HepG2 (cell line): ENCODE measurements at regions of chr20 and their contacts with region 1.

Region 1: DNA sequence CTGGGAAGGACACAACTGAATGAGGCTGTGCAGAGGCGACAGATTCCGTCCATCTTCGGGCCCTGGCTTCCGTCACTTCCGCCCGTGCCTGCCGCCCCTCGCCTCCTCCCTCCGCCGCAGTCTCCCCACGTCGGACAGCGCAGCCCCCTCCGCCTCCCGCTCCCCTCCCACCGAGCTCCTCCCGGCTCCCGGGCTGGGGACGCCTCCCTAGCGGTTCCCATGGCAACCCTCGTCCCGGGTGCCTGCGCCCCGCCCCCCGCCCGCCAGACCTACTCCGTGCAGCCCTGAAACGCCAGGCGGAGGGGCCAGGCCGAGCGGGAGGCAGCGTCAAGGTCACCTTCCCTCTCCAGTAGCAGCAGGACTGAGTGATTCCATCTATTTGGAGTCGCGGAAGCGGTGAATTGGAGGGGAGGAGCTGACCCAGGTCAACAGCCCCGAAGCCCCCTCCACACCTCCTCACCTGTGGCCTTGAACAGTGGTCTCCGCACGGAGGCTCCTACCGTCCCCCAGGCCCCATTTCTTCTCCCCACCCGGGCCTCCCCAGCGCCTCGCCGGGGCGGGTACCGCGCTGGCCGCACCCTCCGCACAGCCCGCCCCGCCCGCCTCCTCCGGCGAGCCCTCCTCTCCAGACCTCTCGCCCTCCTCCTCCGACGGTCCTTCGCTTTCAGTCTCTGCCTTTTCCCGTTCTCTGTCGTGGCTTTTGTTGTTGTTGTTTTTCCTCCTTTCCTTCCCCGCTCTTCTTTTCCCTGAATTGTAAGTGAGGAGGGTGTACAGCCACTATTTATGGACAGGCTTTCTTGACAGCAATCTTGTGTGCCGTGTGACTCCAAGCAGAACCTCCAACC is 951 bp downstream of the NRSN2 start:
- DNase-seq: peak; percentile 99
- ATAC-seq: peak; percentile 85
- H3K4me3 ChIP-seq: peak overlapping the region; percentile 63 to 88 (median 87)
- H3K27ac ChIP-seq: peak overlapping the region; percentile 81
- H3K4me1 ChIP-seq: peaks cover 34% of the 10 kb centered on the region
- H3K27me3 ChIP-seq: no peaks in the 10 kb centered on the region
- CTCF ChIP-seq: peak; percentile 27
- EP300 ChIP-seq: peak in 1 of 2 experiments; percentile 86; a peak in 3 of 4 replicates
- POLR2A ChIP-seq: peak; percentile 80 to 85
- RAD21 ChIP-seq: peak; percentile 65

Region 2: DNA sequence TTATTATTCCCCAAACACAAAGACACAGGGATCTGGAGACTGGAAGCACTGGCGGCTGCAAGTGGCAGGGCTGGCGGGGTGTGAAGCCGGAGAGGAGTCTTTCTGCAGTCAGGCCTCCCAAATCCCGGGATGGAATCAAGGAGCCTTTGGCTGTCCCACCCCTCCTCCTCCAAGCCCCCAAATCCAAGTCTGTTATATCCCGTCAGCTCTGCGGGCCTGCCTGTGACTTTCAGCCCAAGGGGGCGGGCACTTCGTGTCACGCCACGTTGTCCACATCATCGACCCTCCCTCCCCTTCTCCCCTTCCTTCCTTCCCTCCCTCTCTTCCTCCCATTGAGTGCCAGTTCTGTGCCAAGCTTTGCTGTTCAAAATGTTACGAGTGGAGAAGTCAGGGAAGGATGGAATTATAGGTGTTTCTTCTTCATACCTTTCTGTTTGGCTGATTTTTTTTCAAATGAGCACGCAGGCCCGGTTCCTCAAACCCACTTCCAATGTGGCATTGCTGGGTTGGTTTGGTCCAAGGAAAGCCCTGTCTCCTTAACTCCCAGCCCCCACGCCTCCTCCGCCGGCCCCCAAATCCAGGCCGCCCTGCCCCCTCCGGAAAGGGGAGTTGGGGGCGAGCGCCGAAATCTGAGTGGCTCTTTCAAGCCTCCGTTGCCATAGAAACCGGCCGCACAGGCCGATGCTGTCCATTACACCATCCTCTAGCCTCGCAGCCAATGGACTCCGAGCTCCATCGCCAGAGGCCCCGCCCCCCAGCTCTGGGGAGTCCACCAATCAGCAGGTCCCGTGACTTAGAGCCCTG is 37.8 kb before region 1 on chr20:
- CTCF ChIA-PET with region 1: no interaction called
- POLR2A ChIA-PET with region 1: interaction called, 12 read pairs
- in situ Hi-C with region 1: no loop called
- intact Hi-C with region 1: no loop called
- DNase-seq: peak; percentile 96
- ATAC-seq: peak; percentile 96
- H3K4me3 ChIP-seq: peak overlapping the region; percentile 39 to 62 (median 54)
- H3K27ac ChIP-seq: peak overlapping the region; percentile 60
- H3K4me1 ChIP-seq: peaks cover 47% of the 10 kb centered on the region
- H3K27me3 ChIP-seq: no peaks in the 10 kb centered on the region; a peak in 1 of 5 replicates
- CTCF ChIP-seq: 0 out of 2 replicates have a peak, but pooled peaks have one; percentile 3
- EP300 ChIP-seq: 0 out of 4 replicates have a peak, but pooled peaks of 1 of the 2 experiments have one; percentile 7
- POLR2A ChIP-seq: peak; percentile 52 to 79
- RAD21 ChIP-seq: no peak; the same call in 1 of the 2 replicates

Region 3: GRCh38 chr20:362271-363254 is 14.7 kb after region 1 on chr20:
- CTCF ChIA-PET with region 1: no interaction called
- POLR2A ChIA-PET with region 1: interaction called, 68 read pairs
- in situ Hi-C with region 1: no loop called
- intact Hi-C with region 1: no loop called
- DNase-seq: peak; percentile 99
- ATAC-seq: peak; percentile 87
- H3K4me3 ChIP-seq: no peak overlapping the region
- H3K27ac ChIP-seq: peak overlapping the region; percentile 49
- H3K4me1 ChIP-seq: peaks cover 74% of the 10 kb centered on the region
- H3K27me3 ChIP-seq: no peaks in the 10 kb centered on the region
- CTCF ChIP-seq: peak; percentile 100
- EP300 ChIP-seq: peak in 1 of 2 experiments; percentile 92; a peak in 3 of 4 replicates
- POLR2A ChIP-seq: peak; percentile 46 to 53
- RAD21 ChIP-seq: peak; percentile 100

Region 4: GRCh38 chr20:396619-397431 is 49.0 kb after region 1 on chr20:
- CTCF ChIA-PET with region 1: no interaction called
- POLR2A ChIA-PET with region 1: interaction called, 1,587 read pairs
- in situ Hi-C with region 1: no loop called
- intact Hi-C with region 1: no loop called
- DNase-seq: peak; percentile 99
- ATAC-seq: peak; percentile 84
- H3K4me3 ChIP-seq: peak overlapping the region in 1 of 3 experiments; percentile 3; a peak in 1 of 6 replicates
- H3K27ac ChIP-seq: peak overlapping the region; percentile 87
- H3K4me1 ChIP-seq: peaks cover 88% of the 10 kb centered on the region
- H3K27me3 ChIP-seq: no peaks in the 10 kb centered on the region
- CTCF ChIP-seq: peak; percentile 39; the same call in 1 of the 2 replicates
- EP300 ChIP-seq: peak; percentile 95 to 98
- POLR2A ChIP-seq: peak; percentile 23 to 65; a peak in 3 of 4 replicates
- RAD21 ChIP-seq: peak; percentile 83

Region 5: GRCh38 chr20:431012-431904 is 83.4 kb after region 1 on chr20:
- CTCF ChIA-PET with region 1: interaction called, 12 read pairs
- POLR2A ChIA-PET with region 1: interaction called, 13 read pairs
- in situ Hi-C with region 1: loop called (anchors 5 kb)
- intact Hi-C with region 1: no loop called
- DNase-seq: peak; percentile 93
- ATAC-seq: peak; percentile 84
- H3K4me3 ChIP-seq: no peak overlapping the region
- H3K27ac ChIP-seq: no peak overlapping the region
- H3K4me1 ChIP-seq: 0 out of 2 replicates have a peak, but pooled peaks cover 7% of the 10 kb centered on the region
- H3K27me3 ChIP-seq: no peaks in the 10 kb centered on the region
- CTCF ChIP-seq: peak; percentile 99
- EP300 ChIP-seq: no peak; a peak in 1 of 4 replicates
- POLR2A ChIP-seq: peak in 1 of 2 experiments; percentile 62; a peak in 3 of 4 replicates
- RAD21 ChIP-seq: peak; percentile 100

Region 6: DNA sequence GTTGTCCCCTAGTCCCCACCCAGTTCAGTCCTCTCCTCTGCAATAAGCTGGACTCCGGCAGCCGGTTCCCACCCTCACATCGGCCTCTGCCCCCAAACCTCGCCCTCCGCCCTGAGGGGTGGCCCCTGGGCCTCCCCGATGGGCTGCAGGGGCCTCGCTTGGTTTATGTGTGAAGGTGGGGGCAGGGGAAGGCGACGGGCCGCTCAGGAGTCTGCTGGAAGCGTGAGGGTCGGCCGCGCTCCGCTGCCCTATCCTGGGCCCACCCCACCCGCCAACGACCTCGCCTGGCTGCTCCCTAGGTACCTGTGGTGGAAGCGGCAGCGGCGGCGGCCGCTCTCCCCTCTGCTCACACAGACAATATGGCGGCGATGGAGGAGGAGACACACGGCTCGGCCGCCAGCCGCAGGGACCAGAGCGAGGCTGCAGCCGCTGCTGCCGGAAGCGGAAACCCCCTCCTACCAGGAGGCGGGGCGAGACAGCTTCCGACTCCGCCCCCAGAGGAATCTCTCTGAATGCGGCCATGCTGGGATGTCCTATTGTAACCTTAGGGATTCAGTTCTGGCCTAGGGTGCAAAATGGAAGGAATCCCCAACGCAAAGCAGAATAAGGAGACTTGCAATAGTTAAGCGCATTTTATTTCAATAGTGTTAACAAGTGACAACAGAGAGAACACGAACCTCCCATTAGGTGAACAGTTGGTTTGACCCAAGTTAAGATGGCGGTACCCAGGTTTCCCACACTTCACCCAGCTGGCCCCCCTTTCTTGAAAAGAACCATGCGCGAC is 195.7 kb after region 1 on chr20 and contains the start of gene CSNK2A1:
- CTCF ChIA-PET with region 1: no interaction called
- POLR2A ChIA-PET with region 1: interaction called, 15 read pairs
- in situ Hi-C with region 1: no loop called
- intact Hi-C with region 1: no loop called
- DNase-seq: peak; percentile 95
- ATAC-seq: peak; percentile 99
- H3K4me3 ChIP-seq: peak within 1 kb of the TSS; percentile 88 to 98 (median 96)
- H3K27ac ChIP-seq: peak within 1 kb of the TSS; percentile 90
- H3K4me1 ChIP-seq: peaks cover 50% of the 10 kb centered on the region
- H3K27me3 ChIP-seq: peaks cover 0 to 7% of the 10 kb centered on the region in 2 experiments; a peak in 1 of 5 replicates
- CTCF ChIP-seq: no peak
- EP300 ChIP-seq: peak in 1 of 2 experiments; percentile 53; a peak in 1 of 4 replicates
- POLR2A ChIP-seq: peak; percentile 93 to 97
- RAD21 ChIP-seq: peak; percentile 72
- total RNA-seq, gene CSNK2A1: 231 and 288 TPM in 2 replicates